ENCODE measurements at regions of chr6 and their contacts with region 1.

Region 1: DNA sequence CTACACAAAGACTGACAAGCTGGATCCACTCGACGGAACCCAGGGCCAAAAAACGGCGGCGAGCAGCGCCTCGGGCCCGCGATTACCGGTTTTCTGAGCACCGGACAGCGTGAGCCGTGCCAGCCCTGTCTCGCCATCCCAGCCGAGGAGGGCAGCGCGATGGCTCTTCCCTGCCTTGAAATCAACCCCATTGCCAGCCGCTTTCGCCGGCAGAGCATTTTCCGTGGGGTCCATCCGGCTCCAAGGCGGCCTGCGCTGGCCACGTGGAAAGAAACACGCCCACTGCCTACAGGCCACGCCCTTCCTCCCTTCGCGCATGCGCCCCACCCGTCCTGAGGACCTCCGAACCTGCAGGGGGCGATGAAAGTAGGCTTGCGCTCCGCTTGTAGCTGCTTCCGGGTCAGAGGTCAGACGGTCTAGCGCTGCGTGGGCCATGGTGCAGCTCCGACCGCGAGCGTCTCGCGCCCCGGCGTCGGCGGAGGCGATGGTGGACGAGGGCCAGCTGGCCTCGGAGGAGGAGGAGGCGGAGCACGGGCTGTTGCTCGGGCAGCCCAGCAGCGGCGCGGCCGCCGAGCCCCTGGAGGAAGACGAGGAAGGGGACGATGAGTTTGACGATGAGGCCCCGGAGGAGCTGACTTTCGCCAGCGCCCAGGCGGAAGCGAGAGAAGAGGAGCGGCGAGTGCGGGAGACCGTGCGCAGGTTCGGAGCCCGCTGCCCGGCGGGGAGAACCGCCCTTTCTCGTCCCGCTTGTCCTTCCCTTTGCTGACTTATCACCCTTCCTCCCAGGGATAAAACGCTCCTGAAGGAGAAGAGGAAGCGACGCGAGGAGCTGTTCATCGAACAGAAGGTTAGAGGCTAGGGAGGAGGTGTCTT is at the start of gene NOL7:
- DNase-seq: peak; percentile 99
- ATAC-seq: peak; percentile 92
- H3K4me3 Mint-ChIP-seq: peak within 1 kb of the TSS; percentile 92
- H3K27ac Mint-ChIP-seq: peak within 1 kb of the TSS; percentile 90
- H3K4me1 Mint-ChIP-seq: peaks cover 44% of the 10 kb centered on the region
- H3K27me3 Mint-ChIP-seq: no peaks in the 10 kb centered on the region
- total RNA-seq, gene NOL7: 92.8 to 97.3 TPM

Region 2: DNA sequence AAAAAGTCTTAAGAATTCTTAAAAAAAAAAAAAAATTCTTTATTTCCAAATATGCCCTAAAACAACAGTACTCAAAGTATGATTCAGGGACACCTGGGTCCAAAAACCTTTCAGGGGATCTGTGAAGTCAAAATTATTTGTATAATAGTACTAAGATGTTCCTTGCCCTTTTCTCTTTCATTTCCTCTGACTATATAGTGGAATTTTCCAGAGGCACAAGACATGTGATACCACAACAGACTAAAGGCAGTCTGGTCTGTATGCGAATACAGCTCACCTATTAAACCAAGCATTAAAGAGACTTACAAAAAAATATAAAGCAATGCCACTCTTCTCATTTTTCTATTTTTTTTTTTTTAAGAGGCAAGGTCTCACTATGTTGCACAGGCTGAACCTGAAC is 15.3 kb after region 1 on chr6:
- CTCF ChIA-PET with region 1: interaction called, 26 read pairs
- POLR2A ChIA-PET with region 1: interaction called, 3 read pairs
- intact Hi-C with region 1: no loop called
- DNase-seq: no peak
- ATAC-seq: peak; percentile 77
- H3K4me3 Mint-ChIP-seq: no peak overlapping the region
- H3K27ac Mint-ChIP-seq: peak overlapping the region; percentile 76
- H3K4me1 Mint-ChIP-seq: peaks cover 38% of the 10 kb centered on the region
- H3K27me3 Mint-ChIP-seq: no peaks in the 10 kb centered on the region

Region 3: DNA sequence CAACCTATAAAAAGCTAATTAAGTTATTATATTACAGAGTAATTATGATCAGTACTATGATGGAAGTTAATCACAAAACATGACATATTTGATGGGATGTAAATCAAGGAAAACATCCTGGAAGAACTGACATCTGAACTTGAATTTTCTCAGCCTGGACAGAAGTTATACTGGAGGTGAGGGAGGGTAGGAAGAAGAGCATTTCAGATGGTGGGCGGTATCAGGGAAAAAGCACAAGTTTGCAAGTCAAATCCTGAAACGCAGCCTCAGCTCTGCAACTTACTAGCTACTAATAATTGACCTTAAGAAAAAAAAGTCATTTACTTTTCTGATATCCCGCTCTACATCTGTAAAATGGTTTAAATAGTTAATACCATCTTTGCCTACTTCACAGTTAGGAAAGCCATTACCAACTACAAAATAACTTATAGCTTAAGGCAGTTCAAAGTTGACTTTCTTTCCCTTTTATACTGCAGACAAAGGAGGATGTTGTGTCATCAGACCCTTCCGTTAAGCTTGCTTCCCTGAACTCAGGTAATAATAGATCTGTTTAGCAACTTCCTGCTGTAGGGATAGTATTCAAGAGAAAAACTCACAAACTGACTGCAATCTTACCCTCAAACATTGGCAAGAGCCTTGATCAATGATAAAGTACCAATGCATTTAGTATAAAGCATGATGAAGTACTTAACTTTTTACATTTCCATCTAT is 20.9 kb after region 1 on chr6:
- CTCF ChIA-PET with region 1: interaction called, 26 read pairs
- POLR2A ChIA-PET with region 1: interaction called, 3 read pairs
- intact Hi-C with region 1: no loop called
- DNase-seq: no peak
- ATAC-seq: peak; percentile 60
- H3K4me3 Mint-ChIP-seq: no peak overlapping the region
- H3K27ac Mint-ChIP-seq: peak overlapping the region; percentile 83
- H3K4me1 Mint-ChIP-seq: peaks cover 48% of the 10 kb centered on the region
- H3K27me3 Mint-ChIP-seq: no peaks in the 10 kb centered on the region

Region 4: DNA sequence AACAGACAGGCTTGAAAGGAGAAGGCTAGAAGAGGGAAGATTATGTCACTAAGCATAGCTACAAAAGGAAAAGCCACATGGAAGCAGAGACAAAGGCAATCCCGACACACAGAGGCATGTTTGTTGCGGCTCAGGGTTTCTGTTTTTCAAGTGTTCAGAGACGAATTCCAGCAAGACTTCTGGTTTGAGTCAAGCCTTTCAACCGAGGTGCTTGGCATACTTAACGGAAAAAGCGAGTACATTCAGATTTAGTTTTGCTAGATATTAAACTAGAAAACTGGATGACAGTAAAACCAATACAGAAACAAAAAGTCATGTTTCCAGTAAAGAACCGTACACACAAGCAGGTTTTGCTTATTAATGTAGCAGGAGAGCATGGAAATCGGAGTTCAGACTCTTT is 172.0 kb after region 1 on chr6:
- CTCF ChIA-PET with region 1: no interaction called
- POLR2A ChIA-PET with region 1: no interaction called
- intact Hi-C with region 1: loop called in 1 of 2 experiments (anchors 2 kb)
- DNase-seq: peak; percentile 61
- ATAC-seq: peak; percentile 73
- H3K4me3 Mint-ChIP-seq: peak overlapping the region; percentile 7
- H3K27ac Mint-ChIP-seq: peak overlapping the region; percentile 88
- H3K4me1 Mint-ChIP-seq: peaks cover 37% of the 10 kb centered on the region
- H3K27me3 Mint-ChIP-seq: no peaks in the 10 kb centered on the region

Region 5: DNA sequence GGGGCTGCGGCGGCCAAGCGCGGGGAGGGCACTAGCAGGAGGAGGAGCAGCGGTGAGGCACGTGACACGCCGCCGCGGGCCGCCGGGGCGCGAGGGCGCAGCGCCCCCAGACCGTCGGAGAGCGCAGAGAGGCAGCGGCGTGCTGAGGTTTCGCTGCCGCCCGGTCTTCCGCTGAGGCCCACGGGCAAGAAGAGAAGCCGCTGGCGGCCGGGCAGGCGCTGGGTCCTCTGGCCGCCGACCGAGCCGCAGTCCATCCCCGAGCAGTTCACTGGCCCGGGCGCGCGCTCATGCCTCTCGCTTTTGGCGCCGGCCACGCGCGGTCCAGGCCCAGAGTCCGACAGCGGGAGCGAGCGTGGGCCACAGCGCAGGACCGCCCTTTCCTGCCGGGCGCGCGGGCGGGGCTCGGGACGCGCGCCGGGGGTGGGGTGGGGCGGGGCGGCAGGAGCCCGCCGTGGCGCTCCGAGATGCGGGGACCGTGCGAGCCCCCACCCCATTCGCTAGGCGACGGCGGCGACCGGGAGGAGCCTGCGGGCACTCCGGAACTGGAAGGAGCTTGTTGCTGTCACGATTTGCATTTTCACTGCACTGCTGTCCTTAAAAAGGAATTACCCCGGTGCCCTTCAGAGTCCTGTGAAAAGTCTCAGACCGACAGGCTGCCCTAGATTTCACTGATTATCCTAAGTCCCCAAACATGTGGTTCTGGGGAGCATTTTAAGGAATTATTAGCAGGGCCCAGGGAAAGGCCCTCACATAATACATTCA is 199.2 kb after region 1 on chr6 and contains the start of gene MCUR1:
- CTCF ChIA-PET with region 1: interaction called, 3 read pairs
- POLR2A ChIA-PET with region 1: no interaction called
- intact Hi-C with region 1: loop called in 1 of 2 experiments (anchors 1 kb)
- DNase-seq: peak; percentile 92
- ATAC-seq: peak; percentile 87
- H3K4me3 Mint-ChIP-seq: peak within 1 kb of the TSS; percentile 85
- H3K27ac Mint-ChIP-seq: peak within 1 kb of the TSS; percentile 87
- H3K4me1 Mint-ChIP-seq: peaks cover 27% of the 10 kb centered on the region
- H3K27me3 Mint-ChIP-seq: no peaks in the 10 kb centered on the region
- total RNA-seq, gene MCUR1: 37.9 to 59.3 TPM